Activated CD4-positive, alpha-beta T cell treated with anti-CD3 and anti-CD28 coated beads for 36 hours (primary cell): ENCODE measurements at regions of chr13 and their contacts with region 1.

Region 1: GRCh38 chr13:101098873-101099272 is 317.4 kb downstream of the NALCN start:
- DNase-seq: no peak
- ATAC-seq: no peak
- H3K4me3 Mint-ChIP-seq: no peak overlapping the region
- H3K27ac Mint-ChIP-seq: no peak overlapping the region
- H3K4me1 Mint-ChIP-seq: no peaks in the 10 kb centered on the region
- H3K27me3 Mint-ChIP-seq: peaks cover 18% of the 10 kb centered on the region

Region 2: GRCh38 chr13:99900960-99901359 is 1197.9 kb before region 1 on chr13:
- CTCF ChIA-PET with region 1: no interaction called
- POLR2A ChIA-PET with region 1: no interaction called
- intact Hi-C with region 1: loop called in 1 of 2 experiments (anchors 5 kb)
- DNase-seq: no peak
- ATAC-seq: no peak
- H3K4me3 Mint-ChIP-seq: no peak overlapping the region
- H3K27ac Mint-ChIP-seq: no peak overlapping the region
- H3K4me1 Mint-ChIP-seq: no peaks in the 10 kb centered on the region
- H3K27me3 Mint-ChIP-seq: peaks cover 49% of the 10 kb centered on the region

Region 3: GRCh38 chr13:100721885-100722512 is 376.9 kb before region 1 on chr13:
- CTCF ChIA-PET with region 1: interaction called, 3 read pairs
- POLR2A ChIA-PET with region 1: no interaction called
- intact Hi-C with region 1: loop called in 1 of 2 experiments (anchors 1 kb)
- DNase-seq: peak; percentile 77
- ATAC-seq: peak; percentile 63
- H3K4me3 Mint-ChIP-seq: no peak overlapping the region
- H3K27ac Mint-ChIP-seq: no peak overlapping the region
- H3K4me1 Mint-ChIP-seq: no peaks in the 10 kb centered on the region
- H3K27me3 Mint-ChIP-seq: peaks cover 7% of the 10 kb centered on the region

Region 4: DNA sequence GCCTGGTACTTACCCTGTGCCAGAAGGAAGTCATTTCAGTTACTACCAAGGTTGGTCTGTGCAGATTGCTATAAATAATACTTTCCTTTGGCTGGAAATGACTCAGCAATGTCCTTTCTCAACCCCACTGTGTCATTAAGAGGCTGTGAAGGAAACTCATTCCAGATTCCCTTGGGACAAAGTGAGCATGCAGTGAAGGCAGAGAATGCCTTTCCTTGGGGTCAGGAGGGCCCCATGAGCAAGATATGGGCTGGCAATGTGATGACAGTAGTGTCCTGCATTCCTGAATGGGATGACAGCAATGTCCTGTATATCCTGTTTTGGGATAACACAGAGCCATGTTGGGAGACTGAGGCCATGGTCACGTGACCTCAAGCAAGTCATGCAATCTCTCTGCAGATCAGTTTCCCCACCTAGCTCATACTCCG is 211.1 kb before region 1 on chr13:
- CTCF ChIA-PET with region 1: no interaction called
- POLR2A ChIA-PET with region 1: no interaction called
- intact Hi-C with region 1: no loop called
- DNase-seq: no peak
- ATAC-seq: no peak
- H3K4me3 Mint-ChIP-seq: no peak overlapping the region
- H3K27ac Mint-ChIP-seq: no peak overlapping the region
- H3K4me1 Mint-ChIP-seq: no peaks in the 10 kb centered on the region
- H3K27me3 Mint-ChIP-seq: peaks cover 13% of the 10 kb centered on the region